HepG2 (cell line): ENCODE measurements at regions of chr7 and their contacts with region 1.

Region 1: DNA sequence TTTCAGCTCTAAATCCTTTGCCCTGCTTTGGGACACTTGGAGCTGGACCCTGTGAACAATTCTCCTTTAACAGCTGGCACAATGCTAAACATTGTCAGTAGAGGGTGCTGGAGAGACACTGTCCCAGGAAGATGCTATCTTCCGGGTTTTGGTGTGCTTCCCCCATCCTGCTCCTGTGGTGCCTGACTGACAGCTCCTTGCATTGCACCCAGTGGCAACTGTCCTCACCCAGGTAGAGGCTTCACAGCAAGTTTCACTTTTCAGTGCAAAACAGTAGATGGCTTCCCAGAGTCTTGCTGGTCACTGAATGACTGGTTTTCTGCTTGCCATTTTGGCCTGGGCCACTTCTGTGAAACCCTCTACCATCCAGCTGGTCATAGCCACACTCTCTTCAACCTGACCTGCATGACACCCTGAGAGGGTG is 77.3 kb downstream of the CDC14C start:
- DNase-seq: peak; percentile 20
- ATAC-seq: peak; percentile 82
- H3K4me3 ChIP-seq: no peak overlapping the region
- H3K27ac ChIP-seq: no peak overlapping the region
- H3K4me1 ChIP-seq: no peaks in the 10 kb centered on the region
- H3K27me3 ChIP-seq: no peaks in the 10 kb centered on the region
- CTCF ChIP-seq: peak; percentile 73
- EP300 ChIP-seq: no peak
- POLR2A ChIP-seq: no peak
- RAD21 ChIP-seq: no peak

Region 2: GRCh38 chr7:48964074-48964473 is 37.5 kb before region 1 on chr7:
- CTCF ChIA-PET with region 1: no interaction called
- POLR2A ChIA-PET with region 1: no interaction called
- in situ Hi-C with region 1: no loop called
- intact Hi-C with region 1: no loop called
- DNase-seq: no peak
- ATAC-seq: no peak
- H3K4me3 ChIP-seq: no peak overlapping the region
- H3K27ac ChIP-seq: no peak overlapping the region
- H3K4me1 ChIP-seq: no peaks in the 10 kb centered on the region
- H3K27me3 ChIP-seq: no peaks in the 10 kb centered on the region
- CTCF ChIP-seq: no peak
- EP300 ChIP-seq: no peak
- POLR2A ChIP-seq: no peak
- RAD21 ChIP-seq: no peak

Region 3: DNA sequence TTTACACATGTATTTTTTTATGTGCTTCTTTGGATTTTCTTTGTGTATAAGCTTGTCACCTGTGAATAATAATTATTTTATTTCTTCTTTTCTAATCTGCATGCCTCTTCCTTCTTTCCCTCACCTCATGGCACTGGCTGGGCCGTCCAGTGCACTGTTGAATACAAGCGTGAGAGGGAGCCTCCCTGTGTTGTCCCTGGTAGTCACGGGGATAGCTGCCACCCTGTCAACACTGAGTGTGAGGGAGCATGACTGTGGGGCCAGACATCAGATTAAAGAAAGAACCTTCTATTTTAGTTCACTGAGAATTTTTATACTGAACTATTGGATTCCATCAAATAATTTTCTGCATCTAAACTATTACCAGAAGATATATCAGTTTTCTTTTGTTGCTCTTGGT is 110.6 kb after region 1 on chr7:
- CTCF ChIA-PET with region 1: no interaction called
- POLR2A ChIA-PET with region 1: no interaction called
- in situ Hi-C with region 1: no loop called
- intact Hi-C with region 1: no loop called
- DNase-seq: no peak
- ATAC-seq: no peak
- H3K4me3 ChIP-seq: no peak overlapping the region
- H3K27ac ChIP-seq: no peak overlapping the region
- H3K4me1 ChIP-seq: no peaks in the 10 kb centered on the region
- H3K27me3 ChIP-seq: no peaks in the 10 kb centered on the region
- CTCF ChIP-seq: no peak
- EP300 ChIP-seq: no peak
- POLR2A ChIP-seq: no peak
- RAD21 ChIP-seq: no peak

Region 4: GRCh38 chr7:49255054-49255453 is 253.4 kb after region 1 on chr7:
- CTCF ChIA-PET with region 1: no interaction called
- POLR2A ChIA-PET with region 1: no interaction called
- in situ Hi-C with region 1: no loop called
- intact Hi-C with region 1: no loop called
- DNase-seq: no peak
- ATAC-seq: no peak
- H3K4me3 ChIP-seq: no peak overlapping the region
- H3K27ac ChIP-seq: no peak overlapping the region
- H3K4me1 ChIP-seq: no peaks in the 10 kb centered on the region
- H3K27me3 ChIP-seq: no peaks in the 10 kb centered on the region
- CTCF ChIP-seq: no peak
- EP300 ChIP-seq: no peak
- POLR2A ChIP-seq: no peak
- RAD21 ChIP-seq: no peak

Region 5: GRCh38 chr7:49324707-49325106 is 323.1 kb after region 1 on chr7:
- CTCF ChIA-PET with region 1: no interaction called
- POLR2A ChIA-PET with region 1: no interaction called
- in situ Hi-C with region 1: no loop called
- intact Hi-C with region 1: loop called (anchors 5 kb)
- DNase-seq: no peak
- ATAC-seq: no peak
- H3K4me3 ChIP-seq: no peak overlapping the region
- H3K27ac ChIP-seq: no peak overlapping the region
- H3K4me1 ChIP-seq: no peaks in the 10 kb centered on the region
- H3K27me3 ChIP-seq: no peaks in the 10 kb centered on the region
- CTCF ChIP-seq: 0 out of 2 replicates have a peak, but pooled peaks have one; percentile 11
- EP300 ChIP-seq: no peak
- POLR2A ChIP-seq: no peak
- RAD21 ChIP-seq: no peak